ENCODE measurements at regions of chr16 and their contacts with region 1.

Region 1: DNA sequence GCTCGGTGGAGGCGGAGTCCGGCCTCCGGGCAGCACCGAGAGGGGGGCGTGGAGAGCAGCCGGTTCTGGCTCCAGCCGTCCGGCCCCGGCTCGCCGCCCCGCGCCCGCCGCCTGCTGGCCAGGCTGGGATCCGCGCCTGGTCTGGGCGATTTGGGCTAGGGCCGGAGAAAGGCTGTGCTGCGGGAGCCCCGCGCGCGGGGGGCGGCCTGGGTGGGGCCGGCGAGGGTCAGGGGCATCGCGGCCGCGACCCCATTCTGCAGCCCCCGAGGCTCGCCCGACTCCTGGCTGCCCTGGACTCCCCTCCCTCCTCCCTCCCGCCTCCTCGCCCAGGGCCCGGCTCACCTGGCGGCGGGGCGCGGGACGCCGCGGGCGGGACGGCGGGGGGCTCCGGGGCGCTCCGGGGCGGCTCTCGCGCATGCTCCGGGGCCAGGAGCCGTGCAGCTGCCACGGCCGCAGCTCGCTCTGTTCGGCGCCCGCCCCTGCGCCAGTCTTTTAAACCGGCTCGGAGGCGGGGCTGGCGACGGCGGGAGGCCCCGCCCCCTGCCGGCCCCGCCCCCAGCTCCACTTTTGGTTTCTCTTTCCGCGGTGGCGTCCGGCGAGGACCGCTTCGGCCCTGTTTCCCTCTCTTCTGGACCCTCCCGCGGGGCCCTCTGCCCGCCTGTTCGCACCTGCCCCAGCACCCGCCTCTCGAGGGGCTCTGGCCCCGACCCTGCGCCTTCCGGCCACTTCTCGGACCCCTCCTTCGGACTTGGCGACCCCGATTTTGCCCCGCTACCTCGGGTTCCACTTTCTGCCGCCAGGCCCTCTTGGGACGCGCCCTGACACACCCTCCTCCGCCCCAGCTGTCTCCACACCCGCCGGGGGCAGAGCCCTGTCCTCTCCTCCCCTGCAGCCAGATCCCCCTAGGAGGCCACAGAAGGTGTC is at the start of gene SOCS1:
- DNase-seq: peak; percentile 91
- ATAC-seq: peak; percentile 66
- H3K4me3 Mint-ChIP-seq: peak within 1 kb of the TSS; percentile 99
- H3K27ac Mint-ChIP-seq: peak within 1 kb of the TSS; percentile 95
- H3K4me1 Mint-ChIP-seq: peaks cover 41% of the 10 kb centered on the region
- H3K27me3 Mint-ChIP-seq: peaks cover 12% of the 10 kb centered on the region
- total RNA-seq, gene SOCS1: 158 to 200 TPM

Region 2: GRCh38 chr16:10954903-10955302 is 301.1 kb before region 1 on chr16:
- CTCF ChIA-PET with region 1: interaction called, 10 read pairs
- DNase-seq: no peak
- ATAC-seq: no peak
- H3K4me3 Mint-ChIP-seq: no peak overlapping the region
- H3K27ac Mint-ChIP-seq: peak overlapping the region; percentile 22
- H3K4me1 Mint-ChIP-seq: peaks cover 66% of the 10 kb centered on the region
- H3K27me3 Mint-ChIP-seq: no peaks in the 10 kb centered on the region

Region 3: DNA sequence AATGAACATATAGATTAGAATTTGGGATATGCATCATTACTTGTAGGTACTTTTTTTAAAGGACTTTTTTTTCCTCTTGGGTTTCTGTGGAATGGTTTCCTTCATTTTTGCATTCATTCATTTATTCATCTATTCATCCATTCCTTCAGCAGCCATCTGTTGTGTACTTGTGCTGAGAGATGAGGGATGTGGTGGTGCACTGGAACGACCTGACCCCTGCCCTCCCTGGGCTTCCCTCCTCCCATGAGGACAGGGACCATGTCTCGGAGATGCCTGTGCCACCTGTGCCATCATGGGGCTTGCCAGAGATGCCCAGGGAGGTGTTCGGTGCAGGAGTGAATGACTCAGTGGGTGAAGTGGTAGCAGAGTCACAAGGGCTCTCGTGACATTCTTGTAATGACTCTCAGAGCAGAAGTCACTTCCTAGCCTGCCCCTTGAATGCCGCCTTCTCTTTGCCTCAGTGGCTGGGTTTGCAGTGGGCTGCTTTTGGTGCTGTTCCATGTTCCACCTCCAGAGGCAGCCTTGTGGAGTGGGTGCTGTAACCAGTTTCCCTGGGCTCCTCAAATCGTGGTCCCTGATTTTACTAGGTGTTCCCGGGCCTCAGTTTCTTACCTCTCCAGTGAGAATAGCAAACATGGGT is 267.7 kb before region 1 on chr16:
- CTCF ChIA-PET with region 1: interaction called, 30 read pairs
- DNase-seq: peak; percentile 93
- ATAC-seq: peak; percentile 89
- H3K4me3 Mint-ChIP-seq: peak overlapping the region; percentile 61
- H3K27ac Mint-ChIP-seq: peak overlapping the region; percentile 88
- H3K4me1 Mint-ChIP-seq: peaks cover 87% of the 10 kb centered on the region
- H3K27me3 Mint-ChIP-seq: no peaks in the 10 kb centered on the region

Region 4: DNA sequence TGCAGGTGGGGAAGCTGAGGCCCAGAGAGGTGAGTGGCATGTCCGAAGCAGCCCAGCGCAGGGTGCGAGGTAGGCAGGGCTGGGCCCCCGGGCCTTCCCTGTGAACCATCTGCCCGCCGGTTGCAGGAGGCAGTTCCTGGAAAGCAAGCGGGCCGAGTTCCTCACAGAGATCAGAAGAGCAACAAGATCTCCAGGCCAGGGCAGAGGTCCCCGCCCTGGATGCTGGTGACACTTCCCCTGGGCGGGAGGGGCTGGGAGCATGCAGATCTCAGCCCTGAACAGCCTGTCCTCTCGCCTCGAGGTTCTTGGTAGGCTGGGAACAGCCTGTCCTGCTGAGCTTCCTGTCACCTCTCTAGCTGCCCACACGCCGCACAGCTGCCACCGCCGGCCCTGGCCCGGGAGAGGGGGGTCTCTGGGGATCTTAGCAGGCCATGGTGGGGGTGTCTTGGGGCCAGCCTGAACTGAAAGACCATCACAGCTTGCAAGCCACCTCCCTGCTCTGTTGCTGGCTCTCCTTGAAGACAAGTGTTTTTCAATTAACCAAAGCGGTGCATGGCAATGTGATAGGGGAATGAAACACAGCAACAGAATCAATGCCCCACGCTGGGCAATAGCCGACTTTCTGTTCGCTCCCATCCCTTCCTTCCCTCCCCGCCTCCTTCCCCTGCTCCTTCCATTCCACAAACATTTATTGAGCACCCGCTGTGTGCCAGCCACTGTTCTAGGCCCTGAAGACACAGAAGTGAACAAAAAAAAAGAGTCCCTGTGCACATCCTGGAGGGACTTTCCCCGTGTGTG is 31.7 kb before region 1 on chr16:
- CTCF ChIA-PET with region 1: interaction called, 19 read pairs
- DNase-seq: peak; percentile 93
- ATAC-seq: peak; percentile 76
- H3K4me3 Mint-ChIP-seq: peak overlapping the region; percentile 65
- H3K27ac Mint-ChIP-seq: peak overlapping the region; percentile 99
- H3K4me1 Mint-ChIP-seq: peaks cover 71% of the 10 kb centered on the region
- H3K27me3 Mint-ChIP-seq: no peaks in the 10 kb centered on the region

Region 5: DNA sequence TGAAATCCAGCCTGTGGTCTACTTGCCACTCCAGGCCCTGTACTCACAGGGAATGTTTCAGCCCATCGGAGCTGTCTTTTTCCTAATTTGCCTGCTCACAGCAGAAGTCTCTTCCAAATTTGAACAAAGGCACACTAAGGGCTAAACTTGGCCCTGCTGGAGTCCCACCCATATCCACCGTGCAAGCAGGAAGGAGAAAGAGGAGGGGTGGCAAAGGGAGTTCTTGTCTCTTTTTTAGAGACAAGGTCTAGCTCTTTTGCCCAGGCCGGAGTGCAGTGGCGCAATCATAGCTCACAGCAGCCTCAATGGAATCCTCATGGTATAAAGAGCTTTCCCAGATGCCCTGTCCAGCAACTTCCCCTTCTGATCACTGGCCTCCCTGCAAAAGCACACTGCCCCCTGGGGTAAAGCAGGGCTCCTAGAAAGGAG is 27.8 kb after region 1 on chr16:
- CTCF ChIA-PET with region 1: no interaction called
- DNase-seq: no peak
- ATAC-seq: no peak
- H3K4me3 Mint-ChIP-seq: no peak overlapping the region
- H3K27ac Mint-ChIP-seq: no peak overlapping the region
- H3K4me1 Mint-ChIP-seq: peaks cover 6% of the 10 kb centered on the region
- H3K27me3 Mint-ChIP-seq: peaks cover 58% of the 10 kb centered on the region

Region 6: DNA sequence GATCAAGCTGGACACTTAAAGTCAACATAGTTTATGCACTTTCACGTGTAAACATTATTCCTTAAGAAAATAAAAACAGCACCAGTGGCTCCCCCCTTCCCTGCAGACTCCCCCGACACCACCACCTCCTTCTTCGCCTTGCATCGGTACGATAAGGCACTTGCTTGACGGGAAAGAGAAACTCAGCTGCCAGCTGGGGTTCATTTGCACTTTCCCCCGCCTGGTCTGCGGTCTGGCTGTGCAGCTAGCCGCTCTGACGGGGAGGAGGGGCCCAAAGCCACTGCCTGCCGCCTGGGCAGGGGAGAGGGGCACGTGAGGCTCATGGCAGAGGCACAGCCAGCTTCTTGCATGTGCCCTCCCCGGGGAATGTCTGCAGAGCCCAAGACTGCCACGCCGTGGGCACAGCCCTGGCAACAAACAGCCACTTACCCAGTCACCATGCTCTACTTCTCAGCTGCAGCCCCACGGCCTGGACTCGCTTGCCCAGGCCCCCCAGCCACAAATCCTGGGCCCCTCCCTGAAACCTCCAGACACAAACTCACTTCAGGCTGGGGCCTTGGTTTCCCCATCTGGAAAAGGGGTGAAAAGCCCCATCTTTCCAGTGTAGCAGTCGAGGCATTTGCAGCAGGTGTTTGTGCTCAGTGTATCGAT is 41.6 kb after region 1 on chr16:
- CTCF ChIA-PET with region 1: interaction called, 21 read pairs
- DNase-seq: peak; percentile 88
- ATAC-seq: peak; percentile 85
- H3K4me3 Mint-ChIP-seq: peak overlapping the region; percentile 43
- H3K27ac Mint-ChIP-seq: peak overlapping the region; percentile 52
- H3K4me1 Mint-ChIP-seq: peaks cover 23% of the 10 kb centered on the region
- H3K27me3 Mint-ChIP-seq: peaks cover 51% of the 10 kb centered on the region

Region 7: DNA sequence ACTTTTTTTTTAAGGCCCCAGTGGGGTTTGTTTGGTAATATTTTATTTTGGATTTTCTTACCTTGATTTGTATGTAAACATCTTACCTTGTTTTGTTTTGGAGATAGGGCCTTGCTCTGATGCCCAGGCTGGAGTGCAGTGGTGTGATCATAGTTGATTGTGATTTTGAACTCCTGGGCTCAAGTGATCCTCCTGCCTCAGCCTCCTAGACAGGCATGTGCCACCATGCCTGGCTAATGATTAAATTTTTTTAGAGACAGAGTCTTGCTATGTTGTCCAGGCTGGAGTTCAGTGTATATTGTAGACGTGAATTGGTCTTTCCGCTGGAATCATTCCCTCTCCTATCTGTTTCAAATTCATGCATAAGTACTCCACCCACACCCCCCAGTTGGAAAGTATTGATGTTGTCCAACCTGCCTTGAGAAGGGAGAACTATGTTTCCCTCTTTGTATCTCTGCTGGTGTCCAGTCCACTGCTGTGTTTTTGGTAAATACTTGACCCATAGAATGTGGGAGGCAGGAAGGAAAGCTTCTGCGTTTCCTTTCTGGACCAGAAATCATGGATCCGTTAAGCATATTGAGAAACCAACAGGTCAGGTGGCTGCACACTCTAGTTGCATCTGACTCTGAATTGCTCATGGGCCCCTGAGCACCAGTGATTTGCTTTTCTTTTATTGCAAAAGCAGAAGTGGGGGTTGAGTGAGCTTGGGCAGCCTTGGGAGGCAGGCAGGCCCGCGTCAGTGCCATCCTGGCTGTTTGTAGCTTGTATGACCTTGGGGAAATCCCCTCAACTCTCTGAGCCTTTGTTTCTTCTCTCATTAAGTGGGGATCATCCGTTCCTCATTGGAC is 114.3 kb after region 1 on chr16:
- CTCF ChIA-PET with region 1: interaction called, 21 read pairs
- DNase-seq: no peak
- ATAC-seq: no peak
- H3K4me3 Mint-ChIP-seq: no peak overlapping the region
- H3K27ac Mint-ChIP-seq: no peak overlapping the region
- H3K4me1 Mint-ChIP-seq: peaks cover 6% of the 10 kb centered on the region
- H3K27me3 Mint-ChIP-seq: peaks cover 21% of the 10 kb centered on the region

Measured in activated CD8-positive, alpha-beta memory T cell treated with anti-CD3 and anti-CD28 coated beads, Interleukin-2, amount 10 ng/mL, durations not matched to agents 7 days and 5 days (primary cell).